ENCODE measurements at regions of chr1 and their contacts with region 1.

Region 1: DNA sequence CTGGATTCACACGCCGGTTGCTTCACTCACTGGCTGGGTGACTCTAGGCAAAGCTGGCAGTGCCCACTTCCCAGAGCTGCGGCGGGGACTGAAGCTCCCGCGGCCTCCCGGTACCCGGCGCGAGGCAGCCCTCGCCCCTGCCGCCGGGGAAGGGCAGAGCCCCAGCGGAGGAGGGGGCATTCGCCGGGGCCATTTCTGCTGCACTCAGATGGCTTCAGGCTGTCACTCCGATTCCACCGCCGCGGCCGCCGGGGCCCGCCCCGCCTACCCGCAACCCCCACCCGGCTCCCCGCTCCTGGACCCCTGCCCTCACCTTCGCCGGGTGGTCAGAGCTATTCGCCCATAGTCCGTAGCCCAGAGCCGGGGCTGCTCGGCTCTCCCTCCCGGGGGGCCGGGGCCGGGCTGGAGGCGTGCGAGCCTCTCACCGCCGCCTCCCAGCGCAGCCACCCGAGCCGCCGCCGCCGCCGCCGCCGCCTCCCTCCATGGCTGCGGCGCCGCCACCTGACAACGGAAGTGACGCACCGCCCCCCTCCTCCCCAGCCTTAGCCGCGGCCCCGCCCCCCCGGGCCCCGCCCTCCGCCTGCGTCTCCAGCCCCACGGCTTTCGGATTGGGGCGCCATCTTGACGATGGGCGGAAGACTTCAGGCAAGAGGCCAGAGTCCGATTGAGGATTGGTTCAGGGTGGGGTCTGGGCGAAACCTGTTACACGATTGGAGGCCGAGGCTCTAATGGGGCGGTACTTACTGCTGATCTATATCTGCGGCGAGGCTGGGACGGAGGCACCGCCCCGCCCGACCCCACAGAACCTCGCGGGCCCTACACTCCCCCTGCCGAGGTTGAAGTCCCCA is at the start of gene STK40:
- DNase-seq: peak; percentile 95
- H3K4me3 Mint-ChIP-seq: peak within 1 kb of the TSS; percentile 96
- H3K27ac Mint-ChIP-seq: peak within 1 kb of the TSS; percentile 97
- H3K4me1 Mint-ChIP-seq: peaks cover 54% of the 10 kb centered on the region
- H3K27me3 Mint-ChIP-seq: no peaks in the 10 kb centered on the region
- total RNA-seq, gene STK40: 46.5 and 48.7 TPM in 2 replicates

Region 2: DNA sequence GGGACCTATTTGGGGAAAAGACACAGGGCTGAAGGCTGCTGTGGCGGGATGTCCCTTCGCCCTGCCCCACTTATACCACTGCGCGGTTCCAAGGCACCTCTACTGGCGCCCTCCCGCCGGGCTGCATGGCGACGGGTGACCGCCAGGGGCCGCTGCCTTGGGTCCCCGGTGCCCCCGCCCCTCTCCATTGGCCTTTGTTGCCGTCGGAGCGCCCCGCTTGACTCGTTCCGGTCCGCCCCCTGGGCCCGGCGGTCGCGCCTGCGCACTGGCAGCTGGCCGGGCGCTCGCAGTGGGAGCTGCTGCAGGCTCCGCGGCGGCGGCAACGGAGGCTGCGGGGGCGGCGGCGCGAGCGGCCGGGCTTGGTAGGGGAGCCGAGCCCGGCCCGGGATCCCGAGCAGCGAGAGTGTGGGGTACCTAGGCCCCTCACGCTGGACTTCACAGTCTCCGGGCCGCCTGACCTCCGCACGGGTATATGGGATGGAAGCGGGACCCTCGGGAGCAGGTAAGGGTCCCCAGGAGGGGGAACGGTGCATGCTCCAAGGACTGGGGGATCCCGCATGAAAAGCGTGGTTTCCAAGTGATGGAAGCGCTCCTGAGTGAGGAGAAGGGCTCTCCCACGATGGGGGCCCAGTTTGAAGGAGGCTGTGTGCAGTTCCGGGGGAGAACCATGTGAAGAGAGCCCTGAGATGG is 502.5 kb before region 1 on chr1 and contains the start of gene AGO1:
- intact Hi-C with region 1: loop called (anchors 1 kb)
- DNase-seq: peak; percentile 97
- H3K4me3 Mint-ChIP-seq: peak within 1 kb of the TSS; percentile 95
- H3K27ac Mint-ChIP-seq: peak within 1 kb of the TSS; percentile 64
- H3K4me1 Mint-ChIP-seq: peaks cover 48% of the 10 kb centered on the region
- H3K27me3 Mint-ChIP-seq: peaks cover 6% of the 10 kb centered on the region
- total RNA-seq, gene AGO1: 39.0 and 39.5 TPM in 2 replicates

Region 3: DNA sequence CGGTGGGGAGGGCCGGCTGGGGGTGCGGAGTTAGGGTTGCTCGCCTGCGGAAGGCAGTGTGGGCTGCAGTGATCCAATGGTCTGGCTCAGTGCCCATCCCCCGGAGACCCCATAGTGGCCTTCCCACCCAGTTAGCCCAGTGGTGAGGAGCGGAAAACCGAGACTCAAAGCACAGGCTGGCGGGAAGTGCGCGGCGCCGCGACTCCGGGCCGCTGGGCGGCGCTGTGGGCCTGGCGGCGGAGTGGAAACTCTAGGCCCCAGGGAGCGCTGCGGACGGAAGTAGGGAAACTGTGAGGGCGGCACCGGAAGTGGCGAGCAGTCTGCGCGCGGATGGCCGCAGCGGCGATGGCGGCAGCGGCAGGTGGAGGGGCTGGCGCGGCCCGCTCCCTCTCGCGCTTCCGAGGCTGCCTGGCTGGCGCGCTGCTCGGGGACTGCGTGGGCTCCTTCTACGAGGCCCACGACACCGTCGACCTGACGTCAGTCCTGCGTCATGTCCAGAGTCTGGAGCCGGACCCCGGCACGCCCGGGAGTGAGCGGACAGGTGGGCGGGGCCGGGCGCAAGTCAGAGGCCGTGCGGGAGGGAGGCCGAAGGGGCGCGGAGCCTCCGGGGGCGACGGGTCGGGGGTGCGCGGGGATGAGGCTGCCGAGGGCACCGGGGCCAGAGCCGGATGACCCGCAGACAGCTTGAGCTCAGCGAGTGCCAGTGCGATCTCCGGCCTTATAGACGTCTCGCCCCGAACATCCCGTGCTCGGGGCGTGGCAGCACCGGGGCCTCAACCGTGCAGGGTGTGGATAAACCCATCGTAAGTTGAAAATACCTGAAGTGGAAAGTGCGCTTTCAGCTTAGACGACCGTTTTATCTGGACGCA is 296.8 kb before region 1 on chr1 and contains the start of gene ADPRS:
- intact Hi-C with region 1: loop called (anchors 5 kb)
- DNase-seq: peak; percentile 88
- H3K4me3 Mint-ChIP-seq: peak within 1 kb of the TSS; percentile 97
- H3K27ac Mint-ChIP-seq: peak within 1 kb of the TSS; percentile 96
- H3K4me1 Mint-ChIP-seq: peaks cover 20% of the 10 kb centered on the region
- H3K27me3 Mint-ChIP-seq: peaks cover 7% of the 10 kb centered on the region
- total RNA-seq, gene ADPRS: 32.6 and 33.6 TPM in 2 replicates

Region 4: GRCh38 chr1:36306902-36307456 is 78.7 kb before region 1 on chr1:
- intact Hi-C with region 1: loop called (anchors 1 kb)
- DNase-seq: peak; percentile 94
- H3K4me3 Mint-ChIP-seq: peak overlapping the region; percentile 97
- H3K27ac Mint-ChIP-seq: peak overlapping the region; percentile 89
- H3K4me1 Mint-ChIP-seq: peaks cover 39% of the 10 kb centered on the region
- H3K27me3 Mint-ChIP-seq: no peaks in the 10 kb centered on the region

Region 5: GRCh38 chr1:36369061-36369861 is 16.4 kb before region 1 on chr1:
- intact Hi-C with region 1: loop called (anchors 1 kb)
- DNase-seq: peak; percentile 65
- H3K4me3 Mint-ChIP-seq: no peak overlapping the region
- H3K27ac Mint-ChIP-seq: peak overlapping the region; percentile 35
- H3K4me1 Mint-ChIP-seq: peaks cover 69% of the 10 kb centered on the region
- H3K27me3 Mint-ChIP-seq: no peaks in the 10 kb centered on the region

Region 6: GRCh38 chr1:36411674-36412520 is 26.3 kb after region 1 on chr1:
- intact Hi-C with region 1: loop called (anchors 1 kb)
- DNase-seq: peak; percentile 63
- H3K4me3 Mint-ChIP-seq: peak overlapping the region; percentile 43
- H3K27ac Mint-ChIP-seq: peak overlapping the region; percentile 84
- H3K4me1 Mint-ChIP-seq: peaks cover 19% of the 10 kb centered on the region
- H3K27me3 Mint-ChIP-seq: peaks cover 1% of the 10 kb centered on the region

Region 7: DNA sequence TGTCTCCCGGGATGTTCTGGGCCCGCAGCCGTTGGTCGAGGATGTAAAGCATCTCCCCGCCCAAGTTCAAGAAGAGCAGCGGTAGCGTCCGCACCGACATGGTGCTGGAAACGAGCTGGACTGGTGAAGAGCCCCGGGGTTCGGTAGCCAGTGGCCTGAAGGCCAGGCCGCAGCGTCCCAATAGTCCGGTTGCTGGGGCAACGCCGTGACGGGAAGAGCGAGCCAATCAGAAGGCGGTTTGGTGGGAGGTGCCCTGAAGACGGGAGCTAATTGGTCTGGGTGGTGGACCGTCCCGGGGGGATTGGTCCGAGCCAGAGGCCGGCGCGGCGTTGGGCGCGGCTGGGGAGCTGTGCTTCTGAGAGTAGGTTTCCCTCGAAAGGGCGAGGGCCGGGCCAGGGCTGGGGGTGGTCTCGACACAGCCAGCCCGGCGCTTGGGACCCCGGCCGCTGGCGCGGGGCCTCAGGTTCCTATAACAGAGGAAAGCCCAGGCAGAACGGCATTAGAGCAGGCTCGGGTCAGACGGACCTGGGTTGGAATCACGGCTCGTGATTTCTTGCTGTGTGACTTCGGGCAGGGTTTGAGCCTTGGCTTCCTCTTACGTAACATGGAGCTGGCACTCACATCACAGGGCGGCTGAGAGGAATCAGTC is 64.8 kb after region 1 on chr1 and contains the start of gene OSCP1:
- intact Hi-C with region 1: loop called (anchors 1 kb)
- DNase-seq: peak; percentile 86
- H3K4me3 Mint-ChIP-seq: peak within 1 kb of the TSS; percentile 86
- H3K27ac Mint-ChIP-seq: peak within 1 kb of the TSS; percentile 82
- H3K4me1 Mint-ChIP-seq: peaks cover 11% of the 10 kb centered on the region
- H3K27me3 Mint-ChIP-seq: no peaks in the 10 kb centered on the region
- total RNA-seq, gene OSCP1: 0.39 and 0.96 TPM in 2 replicates

Region 8: GRCh38 chr1:36836196-36836883 is 450.7 kb after region 1 on chr1:
- intact Hi-C with region 1: no loop called
- DNase-seq: no peak
- H3K4me3 Mint-ChIP-seq: no peak overlapping the region
- H3K27ac Mint-ChIP-seq: no peak overlapping the region
- H3K4me1 Mint-ChIP-seq: no peaks in the 10 kb centered on the region
- H3K27me3 Mint-ChIP-seq: peaks cover 10% of the 10 kb centered on the region

Measured in activated T-helper 1 cell treated with anti-CD3 and anti-CD28 coated beads, Interleukin-12 subunit alpha, Interleukin-12 subunit beta, Interleukin-2, Interleukin-4 antibody, amounts not matched to agents 30 ng/mL and 10 ng/mL and 1 ng/mL, durations not matched to agents 14 hours and 24 hours and 36 hours (primary cell).